GM12878 (cell line): ENCODE measurements at regions of chr14 and their contacts with region 1.

Region 1: GRCh38 chr14:22370084-22370847 is 218.8 kb downstream of the DAD1 start:
- DNase-seq: no peak
- ATAC-seq: no peak
- H3K4me3 ChIP-seq: no peak overlapping the region
- H3K27ac ChIP-seq: no peak overlapping the region
- H3K4me1 ChIP-seq: no peaks in the 10 kb centered on the region
- H3K27me3 ChIP-seq: no peaks in the 10 kb centered on the region
- CTCF ChIP-seq: no peak
- EP300 ChIP-seq: no peak
- POLR2A ChIP-seq: no peak
- RAD21 ChIP-seq: no peak

Region 2: GRCh38 chr14:22338917-22339715 is 31.1 kb before region 1 on chr14:
- CTCF ChIA-PET with region 1: interaction called, 22 read pairs
- POLR2A ChIA-PET with region 1: no interaction called
- RAD21 ChIA-PET with region 1: interaction called, 4 read pairs
- SMC1A ChIA-PET with region 1: interaction called, 8 read pairs
- in situ Hi-C with region 1: no loop called
- intact Hi-C with region 1: loop called (anchors 5 kb)
- DNase-seq: no peak
- ATAC-seq: no peak
- H3K4me3 ChIP-seq: no peak overlapping the region
- H3K27ac ChIP-seq: no peak overlapping the region
- H3K4me1 ChIP-seq: no peaks in the 10 kb centered on the region
- H3K27me3 ChIP-seq: no peaks in the 10 kb centered on the region
- CTCF ChIP-seq: no peak
- EP300 ChIP-seq: no peak
- POLR2A ChIP-seq: no peak
- RAD21 ChIP-seq: no peak

Region 3: GRCh38 chr14:23269193-23269592 is 898.9 kb after region 1 on chr14:
- CTCF ChIA-PET with region 1: no interaction called
- POLR2A ChIA-PET with region 1: no interaction called
- RAD21 ChIA-PET with region 1: no interaction called
- SMC1A ChIA-PET with region 1: no interaction called
- in situ Hi-C with region 1: no loop called
- intact Hi-C with region 1: no loop called
- DNase-seq: no peak
- ATAC-seq: no peak
- H3K4me3 ChIP-seq: no peak overlapping the region
- H3K27ac ChIP-seq: no peak overlapping the region
- H3K4me1 ChIP-seq: no peaks in the 10 kb centered on the region
- H3K27me3 ChIP-seq: no peaks in the 10 kb centered on the region
- CTCF ChIP-seq: no peak
- EP300 ChIP-seq: no peak
- POLR2A ChIP-seq: no peak
- RAD21 ChIP-seq: no peak